RWPE1 (cell line): ENCODE measurements at regions of chr18 and their contacts with region 1.

Region 1: GRCh38 chr18:56379256-56379655 is 259.1 kb downstream of the TXNL1 start:
- DNase-seq: no peak
- H3K27ac ChIP-seq: no peak overlapping the region
- CTCF ChIP-seq: no peak

Region 2: DNA sequence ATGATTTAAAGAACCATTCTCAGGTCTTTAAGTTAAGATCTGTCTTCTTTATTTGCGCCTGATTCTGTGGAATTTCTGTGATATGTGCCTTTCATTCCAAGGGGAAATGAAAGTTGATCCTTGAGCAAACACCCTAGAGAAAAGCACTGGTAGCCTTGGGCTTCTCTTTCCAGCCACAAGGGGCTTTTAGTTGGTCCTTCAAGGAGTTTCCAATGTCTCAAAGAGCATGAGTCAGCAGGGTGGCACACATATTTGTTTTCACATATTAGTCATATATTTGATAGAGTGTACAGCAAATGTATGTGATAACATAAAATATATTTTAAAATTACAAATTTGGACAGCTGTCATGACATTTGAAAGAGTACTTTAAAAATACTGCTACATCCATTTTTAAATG is 80.3 kb before region 1 on chr18:
- CTCF ChIA-PET with region 1: interaction called, 14 read pairs
- POLR2A ChIA-PET with region 1: no interaction called
- DNase-seq: peak; percentile 21
- H3K27ac ChIP-seq: no peak overlapping the region
- CTCF ChIP-seq: no peak